ENCODE measurements at regions of chr10 and their contacts with region 1.

Region 1: DNA sequence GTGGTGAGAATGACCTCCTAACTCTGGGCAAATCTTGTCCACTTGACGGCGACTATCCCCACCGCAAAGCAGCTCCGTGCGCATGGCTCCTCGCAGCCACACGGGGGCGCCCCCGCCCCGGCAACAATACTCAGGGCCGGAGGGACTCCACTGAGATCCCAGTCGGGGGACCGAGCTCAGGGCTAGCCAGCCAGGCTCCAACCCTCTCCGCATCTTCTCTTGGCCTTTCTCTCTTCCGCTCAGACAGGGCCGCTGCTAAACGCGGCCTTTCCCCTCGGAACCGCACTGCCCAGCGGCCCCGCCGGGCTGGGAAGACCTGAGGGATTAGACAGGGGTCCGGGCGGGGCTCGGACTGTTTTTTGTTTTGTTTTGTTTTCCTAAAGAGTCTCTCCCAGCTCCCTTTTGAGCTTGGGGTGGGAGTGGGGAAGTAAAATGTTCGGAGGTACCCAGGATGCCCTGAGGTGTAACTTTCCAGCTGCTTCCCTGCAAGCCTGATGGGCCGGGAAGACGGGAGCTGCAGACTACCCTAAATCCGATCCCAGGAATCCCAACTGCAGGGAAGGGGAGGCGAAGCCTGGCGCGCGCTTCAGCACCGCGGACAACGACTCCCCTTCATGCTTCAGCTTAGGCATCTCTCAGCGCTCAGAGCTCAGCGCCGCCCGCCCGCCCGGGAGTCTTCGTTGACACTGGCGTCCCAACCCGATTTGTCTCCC is 2.7 kb downstream of the KCNIP2 start:
- DNase-seq: peak; percentile 86
- ATAC-seq: peak; percentile 90

Region 2: DNA sequence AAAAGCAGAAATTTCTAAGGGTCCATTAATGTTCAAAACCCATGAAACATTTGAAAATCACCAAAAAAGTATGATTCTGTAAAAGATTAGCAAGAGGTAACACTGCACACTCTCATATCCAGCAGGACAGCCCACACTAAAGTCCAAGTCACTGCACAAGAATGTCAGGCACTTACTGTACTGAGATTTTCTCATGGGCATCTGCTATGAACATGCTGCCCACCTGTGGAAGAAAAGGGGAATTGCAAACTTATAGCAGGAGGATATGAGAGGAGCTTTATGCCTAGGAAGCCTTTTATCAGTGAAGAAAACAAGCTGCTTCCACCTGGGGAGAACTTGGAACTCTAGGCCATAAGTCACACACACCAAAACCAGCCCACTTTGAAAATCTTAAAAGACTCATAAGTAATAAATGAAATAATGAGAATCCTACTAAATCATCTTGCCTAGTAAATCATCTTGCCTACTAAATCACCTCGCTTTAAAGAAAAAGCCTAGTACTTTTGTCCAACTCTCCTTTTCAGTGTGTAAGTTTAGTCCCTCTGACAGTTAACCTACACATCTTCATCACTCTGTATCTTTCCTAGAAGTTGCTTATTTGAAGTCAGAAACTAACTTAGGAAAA is 169.0 kb after region 1 on chr10:
- intact Hi-C with region 1: loop called (anchors 10 kb)
- DNase-seq: no peak
- ATAC-seq: peak; percentile 95